IMR-90 (cell line): ENCODE measurements at regions of chr7 and their contacts with region 1.

Region 1: GRCh38 chr7:81430150-81430549 is 339.7 kb downstream of the HGF start:
- DNase-seq: no peak
- ATAC-seq: no peak
- H3K4me3 ChIP-seq: no peak overlapping the region
- H3K27ac ChIP-seq: no peak overlapping the region
- H3K4me1 ChIP-seq: no peaks in the 10 kb centered on the region
- H3K27me3 ChIP-seq: no peaks in the 10 kb centered on the region
- CTCF ChIP-seq: no peak
- POLR2A ChIP-seq: no peak
- RAD21 ChIP-seq: no peak

Region 2: DNA sequence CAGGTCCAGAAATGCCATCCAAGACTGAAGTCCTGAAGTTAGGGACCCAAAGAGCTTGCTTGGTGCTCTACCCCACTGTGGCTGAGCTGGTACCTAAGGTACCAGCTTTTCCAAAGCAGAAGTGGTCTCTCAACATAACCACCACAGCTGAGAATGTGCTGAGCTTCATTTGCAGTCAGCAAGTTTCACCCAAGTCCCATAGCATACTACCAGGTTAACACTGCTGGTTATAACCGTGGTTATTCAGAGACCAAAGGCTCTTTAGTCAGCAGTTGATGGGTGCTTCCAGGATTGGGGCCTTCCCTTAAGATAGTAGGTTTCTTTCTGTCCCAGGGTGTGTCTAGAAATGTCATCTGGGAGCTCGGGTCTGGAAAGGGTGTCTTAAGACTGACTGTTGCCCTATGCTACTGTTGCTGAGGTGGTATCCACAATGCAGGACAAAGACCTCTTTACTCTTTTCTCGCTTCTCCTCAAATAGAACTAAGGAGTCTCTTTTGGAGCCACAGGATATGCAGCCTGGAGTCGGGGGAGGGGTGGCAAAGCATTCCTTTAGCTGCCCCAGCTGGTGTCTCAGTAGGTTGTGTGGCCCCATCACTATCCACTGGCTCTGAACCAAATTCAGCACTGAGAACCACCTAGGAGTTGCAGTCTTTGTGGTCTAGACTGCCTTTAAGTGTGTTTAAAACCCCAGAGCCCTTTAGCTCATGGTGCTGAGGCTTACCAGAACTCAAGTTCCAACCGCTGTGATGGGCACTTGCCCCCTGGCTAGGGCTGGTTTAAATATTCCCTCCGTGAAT is 156.4 kb before region 1 on chr7:
- CTCF ChIA-PET with region 1: no interaction called
- POLR2A ChIA-PET with region 1: no interaction called
- dilution Hi-C with region 1: no loop called
- in situ Hi-C with region 1: loop called (anchors 10 kb)
- intact Hi-C with region 1: no loop called
- DNase-seq: no peak
- ATAC-seq: no peak
- H3K4me3 ChIP-seq: no peak overlapping the region
- H3K27ac ChIP-seq: no peak overlapping the region
- H3K4me1 ChIP-seq: no peaks in the 10 kb centered on the region
- H3K27me3 ChIP-seq: no peaks in the 10 kb centered on the region
- CTCF ChIP-seq: no peak
- POLR2A ChIP-seq: no peak
- RAD21 ChIP-seq: no peak